ENCODE measurements at regions of chr3 and their contacts with region 1.

Region 1: GRCh38 chr3:122305818-122306621 is 19.0 kb upstream of the CSTA start:
- DNase-seq: peak; percentile 52
- H3K4me3 Mint-ChIP-seq: no peak overlapping the region
- H3K27ac Mint-ChIP-seq: no peak overlapping the region
- H3K4me1 Mint-ChIP-seq: no peaks in the 10 kb centered on the region
- H3K27me3 Mint-ChIP-seq: no peaks in the 10 kb centered on the region
- CTCF ChIP-seq: peak; percentile 38

Region 2: DNA sequence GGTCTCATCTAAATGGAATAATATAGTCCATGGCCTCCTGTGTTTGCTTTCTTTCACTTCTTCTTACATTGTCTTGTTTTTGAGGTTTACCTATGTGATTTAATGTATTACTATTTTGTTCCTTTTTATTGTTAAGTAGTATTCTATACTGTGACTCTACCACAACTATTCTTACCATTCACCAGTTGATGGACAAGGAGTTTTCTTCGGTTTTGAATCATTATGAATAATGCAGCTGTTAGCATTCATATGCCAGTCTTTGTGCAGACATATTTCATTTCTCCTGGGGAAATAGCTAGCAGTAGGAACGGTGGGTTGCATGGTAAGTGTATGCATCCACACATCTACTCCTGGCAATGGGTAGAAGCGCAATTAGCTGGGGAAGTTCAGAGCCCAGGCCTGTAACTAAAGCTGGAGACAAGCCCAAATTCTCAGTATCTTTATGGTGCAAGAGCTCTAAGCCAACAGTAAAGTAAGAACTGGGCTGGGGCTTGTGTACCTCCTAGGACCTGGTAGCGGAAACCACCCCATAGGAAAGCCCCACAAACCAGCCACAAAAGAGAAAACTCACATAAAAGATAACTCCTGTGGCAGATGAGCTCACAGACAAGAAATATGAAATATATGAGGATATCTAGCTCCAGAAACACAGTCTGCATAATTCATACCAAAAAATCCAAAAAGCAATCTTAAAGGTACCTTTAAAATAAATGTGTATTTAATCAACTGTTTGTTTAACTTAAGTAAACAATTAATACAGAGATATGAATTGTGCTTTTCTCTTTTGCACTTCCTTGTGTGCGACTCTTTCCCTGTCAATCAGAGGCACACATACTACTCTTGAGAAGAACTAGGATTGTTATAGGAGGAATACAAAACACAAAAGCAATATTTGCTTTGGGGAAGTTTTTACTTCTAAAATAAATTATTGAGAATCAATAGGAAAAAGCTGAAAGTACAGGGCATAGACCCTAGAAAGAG is 16.4 kb after region 1 on chr3:
- CTCF ChIA-PET with region 1: interaction called, 26 read pairs
- POLR2A ChIA-PET with region 1: interaction called, 59 read pairs
- intact Hi-C with region 1: no loop called
- DNase-seq: no peak
- H3K4me3 Mint-ChIP-seq: no peak overlapping the region
- H3K27ac Mint-ChIP-seq: no peak overlapping the region
- H3K4me1 Mint-ChIP-seq: peaks cover 10% of the 10 kb centered on the region
- H3K27me3 Mint-ChIP-seq: no peaks in the 10 kb centered on the region
- CTCF ChIP-seq: no peak

Region 3: DNA sequence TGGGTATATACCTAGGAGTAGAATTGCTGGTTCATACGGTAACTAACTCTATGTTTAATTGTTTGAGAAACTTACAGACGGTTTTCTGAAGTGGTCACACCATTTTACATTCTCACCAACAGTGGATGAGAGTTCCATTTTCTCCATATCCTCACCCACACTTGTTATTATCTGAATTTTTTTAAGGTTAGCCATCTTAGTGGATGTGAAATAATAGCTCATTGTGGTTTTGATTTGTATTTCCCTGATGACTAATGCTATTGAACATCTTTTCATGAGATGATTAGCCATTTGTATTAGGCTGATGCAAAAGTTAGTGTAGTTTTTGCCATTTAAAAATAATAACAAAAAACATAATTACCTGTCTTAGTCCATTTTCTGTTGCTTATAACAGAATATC is 37.6 kb after region 1 on chr3:
- CTCF ChIA-PET with region 1: interaction called, 34 read pairs
- POLR2A ChIA-PET with region 1: interaction called, 89 read pairs
- intact Hi-C with region 1: no loop called
- DNase-seq: no peak
- H3K4me3 Mint-ChIP-seq: no peak overlapping the region
- H3K27ac Mint-ChIP-seq: no peak overlapping the region
- H3K4me1 Mint-ChIP-seq: no peaks in the 10 kb centered on the region
- H3K27me3 Mint-ChIP-seq: no peaks in the 10 kb centered on the region
- CTCF ChIP-seq: no peak

Region 4: GRCh38 chr3:122356415-122356814 is 50.4 kb after region 1 on chr3:
- CTCF ChIA-PET with region 1: interaction called, 165 read pairs
- POLR2A ChIA-PET with region 1: interaction called, 89 read pairs
- intact Hi-C with region 1: loop called (anchors 1 kb)
- DNase-seq: peak; percentile 81
- H3K4me3 Mint-ChIP-seq: no peak overlapping the region
- H3K27ac Mint-ChIP-seq: no peak overlapping the region
- H3K4me1 Mint-ChIP-seq: peaks cover 26% of the 10 kb centered on the region
- H3K27me3 Mint-ChIP-seq: no peaks in the 10 kb centered on the region
- CTCF ChIP-seq: peak; percentile 50

Region 5: GRCh38 chr3:122383771-122384697 is 78.0 kb after region 1 on chr3 and contains the start of gene FAM162A:
- CTCF ChIA-PET with region 1: interaction called, 36 read pairs
- POLR2A ChIA-PET with region 1: interaction called, 45 read pairs
- intact Hi-C with region 1: loop called (anchors 2 kb)
- DNase-seq: peak; percentile 93
- H3K4me3 Mint-ChIP-seq: peak within 1 kb of the TSS; percentile 98
- H3K27ac Mint-ChIP-seq: peak within 1 kb of the TSS; percentile 97
- H3K4me1 Mint-ChIP-seq: peaks cover 22% of the 10 kb centered on the region
- H3K27me3 Mint-ChIP-seq: no peaks in the 10 kb centered on the region
- CTCF ChIP-seq: peak; percentile 22
- total RNA-seq, gene FAM162A: 50.6 and 59.1 TPM in 2 replicates

Region 6: DNA sequence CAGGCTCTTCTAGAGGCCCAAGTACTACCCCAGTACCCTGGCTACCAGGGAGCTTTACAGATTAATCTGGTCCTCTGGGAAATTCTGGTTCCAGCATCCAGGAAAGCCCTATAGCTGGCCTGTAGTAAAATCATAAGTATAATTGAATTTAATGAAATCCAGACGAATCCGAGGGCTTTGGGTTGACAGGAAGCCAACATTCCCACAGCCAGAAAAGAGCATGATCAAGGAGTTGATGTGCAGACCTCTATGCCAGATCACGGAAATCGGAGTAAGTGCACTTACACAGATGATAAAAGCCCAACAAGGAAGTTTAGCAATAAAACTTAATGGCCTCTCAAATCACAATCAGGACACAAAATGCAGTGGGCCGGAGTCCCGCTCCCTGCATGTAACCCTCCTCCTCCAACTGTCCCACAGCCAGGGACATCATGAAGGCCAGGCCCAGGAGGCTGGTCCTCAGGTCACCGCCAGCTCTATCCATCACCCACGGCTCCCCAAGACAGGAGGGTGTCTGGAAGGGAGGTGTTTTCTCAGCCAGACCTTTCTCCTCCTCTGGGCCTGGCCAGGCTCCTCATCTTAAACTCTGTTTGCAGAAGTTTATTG is 832.9 kb after region 1 on chr3:
- CTCF ChIA-PET with region 1: no interaction called
- POLR2A ChIA-PET with region 1: no interaction called
- intact Hi-C with region 1: no loop called
- DNase-seq: no peak
- H3K4me3 Mint-ChIP-seq: no peak overlapping the region
- H3K27ac Mint-ChIP-seq: no peak overlapping the region
- H3K4me1 Mint-ChIP-seq: no peaks in the 10 kb centered on the region
- H3K27me3 Mint-ChIP-seq: no peaks in the 10 kb centered on the region
- CTCF ChIP-seq: no peak

Region 7: GRCh38 chr3:123521179-123521969 is 1215.4 kb after region 1 on chr3:
- CTCF ChIA-PET with region 1: no interaction called
- POLR2A ChIA-PET with region 1: no interaction called
- intact Hi-C with region 1: no loop called
- DNase-seq: peak; percentile 3
- H3K4me3 Mint-ChIP-seq: no peak overlapping the region
- H3K27ac Mint-ChIP-seq: no peak overlapping the region
- H3K4me1 Mint-ChIP-seq: peaks cover 18% of the 10 kb centered on the region
- H3K27me3 Mint-ChIP-seq: no peaks in the 10 kb centered on the region
- CTCF ChIP-seq: no peak

Measured in MCF 10A (cell line).